ENCODE measurements at regions of chr14 and their contacts with region 1.

Region 1: DNA sequence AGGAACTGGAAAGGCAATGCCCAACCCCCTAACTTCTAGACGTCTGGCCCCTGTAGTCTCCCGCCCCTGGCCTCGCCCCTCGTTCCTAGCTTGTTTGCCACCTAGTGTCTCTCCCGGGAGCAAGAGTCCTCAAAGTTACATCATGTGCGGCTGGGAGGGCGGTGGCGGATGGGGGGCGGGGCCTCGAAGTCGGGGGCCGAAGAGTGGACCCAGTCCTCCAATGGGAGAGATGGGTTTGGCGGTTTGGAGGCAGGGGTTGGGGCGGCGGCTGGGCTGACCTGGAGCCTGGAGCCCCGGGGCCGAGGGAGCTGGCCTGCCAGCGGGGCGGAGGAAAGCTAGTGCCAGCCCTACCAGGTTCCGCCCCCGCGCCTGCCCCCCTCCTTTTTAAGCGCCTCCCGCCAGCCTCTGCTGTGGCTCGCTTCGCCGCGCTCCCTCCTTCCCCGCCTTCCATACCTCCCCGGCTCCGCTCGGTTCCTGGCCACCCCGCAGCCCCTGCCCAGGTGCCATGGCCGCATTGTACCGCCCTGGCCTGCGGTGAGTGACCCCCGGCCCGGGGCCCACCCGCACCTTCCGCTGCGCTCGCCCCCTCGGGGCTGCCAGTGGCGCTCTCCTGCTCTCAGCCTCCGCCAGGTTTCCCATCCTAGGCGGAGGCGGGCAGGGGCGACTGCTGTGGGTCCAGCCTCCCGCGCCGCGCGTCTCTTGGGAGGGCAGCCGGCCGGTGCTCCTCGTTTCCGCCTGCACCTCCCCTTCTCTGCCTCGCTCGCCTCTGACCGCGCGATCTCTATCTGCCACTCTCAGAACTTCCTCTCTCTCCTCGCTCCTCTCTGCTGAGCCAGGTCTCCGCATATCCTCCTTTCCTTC is at the start of gene PCK2:
- DNase-seq: peak; percentile 68
- H3K4me3 Mint-ChIP-seq: peak within 1 kb of the TSS; percentile 97
- H3K27ac Mint-ChIP-seq: peak within 1 kb of the TSS; percentile 98
- H3K4me1 Mint-ChIP-seq: peaks cover 31% of the 10 kb centered on the region
- H3K27me3 Mint-ChIP-seq: no peaks in the 10 kb centered on the region
- total RNA-seq, gene PCK2: 62.7 and 62.8 TPM in 2 replicates

Region 2: DNA sequence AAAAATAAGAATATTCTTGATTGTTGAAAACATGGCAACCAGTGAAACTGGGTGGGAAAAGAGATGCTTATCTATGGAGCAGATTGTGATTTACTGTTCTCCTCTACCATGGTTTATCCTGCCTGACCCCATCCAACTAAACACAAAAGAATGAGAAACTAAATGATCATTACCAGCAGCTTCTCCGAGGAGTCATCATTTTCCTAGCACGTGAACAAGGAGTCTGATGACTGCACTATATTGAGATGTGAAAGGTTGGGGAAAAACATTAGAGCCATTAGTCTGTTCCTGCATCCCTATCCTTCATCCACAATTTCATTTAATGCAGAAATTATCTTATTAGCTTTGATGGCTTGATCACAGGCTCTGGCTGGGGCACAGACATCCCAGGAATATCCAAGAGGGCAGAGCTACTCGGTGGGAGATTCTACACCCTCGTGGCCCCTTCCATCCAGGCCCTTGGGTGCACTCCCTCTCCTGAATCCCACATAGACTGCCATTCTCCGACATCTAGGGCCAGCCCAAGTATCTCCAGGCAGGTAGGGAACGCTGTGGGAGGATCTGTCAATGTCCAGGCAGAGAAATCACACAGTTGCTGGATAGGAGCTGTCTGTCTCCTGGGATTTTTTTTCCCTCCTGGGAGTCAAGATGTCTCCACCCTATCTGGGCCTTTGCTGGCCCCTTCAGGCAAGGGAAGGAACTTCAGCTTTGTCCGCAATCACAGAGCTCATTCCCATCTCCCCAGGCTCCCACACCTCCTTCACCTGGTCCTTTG is 183.8 kb before region 1 on chr14:
- intact Hi-C with region 1: no loop called
- DNase-seq: no peak
- H3K4me3 Mint-ChIP-seq: no peak overlapping the region
- H3K27ac Mint-ChIP-seq: no peak overlapping the region
- H3K4me1 Mint-ChIP-seq: peaks cover 7% of the 10 kb centered on the region
- H3K27me3 Mint-ChIP-seq: no peaks in the 10 kb centered on the region

Region 3: DNA sequence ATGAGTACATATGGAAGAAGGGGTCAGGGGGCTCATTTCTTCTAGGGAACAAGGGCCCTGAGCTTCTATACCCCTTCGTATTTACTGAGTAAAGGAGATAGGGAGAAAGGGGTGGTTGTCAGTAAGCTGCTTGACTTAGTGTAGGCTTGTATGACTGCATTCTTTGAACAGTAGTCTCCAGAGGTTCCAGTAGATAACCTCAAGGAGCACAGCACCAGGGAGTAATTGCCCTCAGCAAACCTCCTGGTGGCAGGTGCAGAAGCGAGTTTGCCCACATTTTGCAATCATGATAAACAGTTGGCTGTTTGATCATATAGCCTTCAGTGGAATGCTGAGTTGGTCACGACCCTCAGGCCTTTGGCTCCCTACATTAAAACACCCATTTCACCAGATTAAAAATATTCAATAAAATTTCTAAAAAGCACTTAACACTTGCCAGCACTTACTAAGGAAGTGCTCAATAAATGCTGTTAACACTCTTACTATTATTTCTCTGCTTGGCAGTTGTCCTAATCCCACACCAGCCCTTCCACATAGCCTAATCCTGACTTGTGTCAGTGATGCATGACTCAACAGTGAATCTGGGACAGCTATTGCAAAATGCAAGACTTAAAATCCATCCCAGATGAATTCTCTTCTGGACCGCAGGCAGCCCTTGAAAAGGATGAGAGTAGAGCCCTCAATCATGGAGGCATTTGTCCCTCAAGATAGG is 109.1 kb before region 1 on chr14:
- intact Hi-C with region 1: loop called (anchors 2 kb)
- DNase-seq: no peak
- H3K4me3 Mint-ChIP-seq: no peak overlapping the region
- H3K27ac Mint-ChIP-seq: no peak overlapping the region
- H3K4me1 Mint-ChIP-seq: peaks cover 14% of the 10 kb centered on the region
- H3K27me3 Mint-ChIP-seq: no peaks in the 10 kb centered on the region

Region 4: DNA sequence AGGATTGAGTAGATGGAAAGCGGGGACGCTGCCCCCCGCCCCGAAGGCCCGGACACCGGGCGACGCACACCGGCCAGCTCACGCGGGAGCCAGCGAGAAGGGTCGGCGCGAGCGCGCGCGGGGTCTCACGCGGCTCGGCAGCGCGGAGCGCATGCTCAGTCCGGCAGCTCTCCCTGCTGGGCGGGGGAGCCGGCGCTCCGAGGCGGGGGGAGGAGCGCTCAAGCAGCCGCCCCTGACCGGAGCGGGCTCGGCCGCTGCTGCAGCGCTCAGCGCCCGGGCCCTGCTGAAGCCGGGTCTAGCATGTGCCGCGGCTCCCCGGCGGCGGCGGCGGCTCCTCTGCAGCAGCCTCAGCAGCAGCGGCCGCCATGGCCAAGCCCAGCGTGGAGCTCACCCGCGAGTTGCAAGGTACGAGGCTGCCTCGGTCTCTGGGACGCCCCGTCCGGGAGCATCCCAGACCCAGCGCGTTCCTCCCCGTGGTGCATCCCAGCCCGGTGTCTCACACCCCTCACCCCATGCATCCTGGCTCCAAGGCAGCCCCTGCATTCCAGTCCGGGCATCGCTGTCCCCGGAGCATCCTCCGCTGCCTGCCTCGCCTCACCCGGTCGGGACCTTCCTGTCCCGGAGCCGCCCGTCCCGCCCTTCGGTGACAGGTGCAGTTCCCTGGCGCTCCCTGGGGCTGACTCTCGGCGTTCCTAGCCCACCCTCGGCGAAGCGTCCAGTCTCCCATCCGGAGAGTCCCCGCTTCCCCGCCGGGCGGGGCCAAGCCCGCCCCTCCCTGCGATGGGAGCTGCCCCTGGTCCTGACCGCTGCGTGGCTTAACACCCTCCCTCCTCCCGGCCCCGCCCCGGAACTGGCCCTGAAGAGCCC is 42.1 kb before region 1 on chr14 and contains the start of gene CARMIL3:
- intact Hi-C with region 1: loop called (anchors 1 kb)
- DNase-seq: peak; percentile 58
- H3K4me3 Mint-ChIP-seq: peak within 1 kb of the TSS; percentile 79
- H3K27ac Mint-ChIP-seq: peak within 1 kb of the TSS; percentile 61
- H3K4me1 Mint-ChIP-seq: peaks cover 17% of the 10 kb centered on the region
- H3K27me3 Mint-ChIP-seq: peaks cover 24% of the 10 kb centered on the region
- total RNA-seq, gene CARMIL3: 1.3 and 1.7 TPM in 2 replicates

Region 5: GRCh38 chr14:24058260-24058950 is 35.7 kb before region 1 on chr14:
- intact Hi-C with region 1: loop called (anchors 1 kb)
- DNase-seq: peak; percentile 38
- H3K4me3 Mint-ChIP-seq: no peak overlapping the region
- H3K27ac Mint-ChIP-seq: no peak overlapping the region
- H3K4me1 Mint-ChIP-seq: peaks cover 3% of the 10 kb centered on the region
- H3K27me3 Mint-ChIP-seq: peaks cover 3% of the 10 kb centered on the region

Region 6: DNA sequence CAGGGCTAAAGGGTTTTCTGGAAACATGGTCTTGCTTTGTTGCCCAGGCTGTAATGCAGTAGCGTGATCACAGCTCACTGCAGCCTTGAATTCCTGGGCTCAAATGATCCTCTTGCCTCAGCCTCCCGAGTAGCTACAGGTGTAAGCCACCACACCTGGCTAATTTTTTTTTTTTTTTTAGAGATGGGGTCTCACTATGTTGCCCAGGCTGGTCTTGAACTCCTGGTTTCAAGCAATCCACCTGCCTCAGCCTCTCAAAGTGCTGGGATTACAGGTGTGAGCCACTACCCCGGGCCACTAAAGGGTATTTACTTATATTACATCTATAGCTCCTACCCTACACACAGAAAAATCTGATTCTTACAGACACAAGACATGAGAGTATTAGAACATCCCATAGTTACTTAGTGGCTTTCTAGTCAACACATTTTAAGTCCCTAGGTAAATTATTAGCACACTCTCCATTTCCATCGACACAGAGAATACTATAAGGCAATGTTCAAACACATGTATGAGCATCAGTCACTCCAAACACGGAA is 14.3 kb after region 1 on chr14:
- intact Hi-C with region 1: loop called (anchors 1 kb)
- DNase-seq: no peak
- H3K4me3 Mint-ChIP-seq: no peak overlapping the region
- H3K27ac Mint-ChIP-seq: peak overlapping the region; percentile 93
- H3K4me1 Mint-ChIP-seq: peaks cover 18% of the 10 kb centered on the region
- H3K27me3 Mint-ChIP-seq: no peaks in the 10 kb centered on the region

Region 7: DNA sequence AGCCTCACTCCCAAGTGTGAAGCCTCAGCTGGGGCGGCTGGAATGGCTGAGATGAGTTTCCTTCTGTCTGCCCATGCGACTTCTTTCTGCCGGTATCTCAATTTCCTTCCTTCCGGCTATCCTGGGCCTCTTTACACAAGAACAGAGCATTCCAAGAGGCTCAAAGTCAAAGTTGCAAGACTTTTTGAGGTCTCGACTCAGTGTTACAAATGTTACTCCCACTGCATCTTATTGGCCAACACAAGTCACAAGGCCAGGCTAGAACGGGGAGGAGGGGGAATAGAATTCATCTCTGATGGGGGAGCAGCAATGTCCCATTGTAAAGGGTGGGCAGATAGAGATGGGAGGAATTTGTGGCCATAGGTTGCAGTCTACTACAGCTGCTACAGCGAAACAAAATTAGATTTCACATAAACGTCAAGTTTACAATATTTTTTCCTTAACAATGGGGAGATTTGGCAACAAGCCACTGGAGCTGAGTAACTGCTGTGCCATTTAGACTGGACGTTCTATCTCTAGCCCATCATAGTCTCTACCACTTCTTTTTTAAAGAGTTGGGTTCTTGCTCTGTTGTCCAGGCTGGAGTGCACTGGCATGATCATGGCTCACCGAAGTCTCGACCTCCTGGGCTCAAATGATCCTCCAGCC is 295.2 kb after region 1 on chr14:
- intact Hi-C with region 1: no loop called
- DNase-seq: no peak
- H3K4me3 Mint-ChIP-seq: no peak overlapping the region
- H3K27ac Mint-ChIP-seq: no peak overlapping the region
- H3K4me1 Mint-ChIP-seq: no peaks in the 10 kb centered on the region
- H3K27me3 Mint-ChIP-seq: peaks cover 32% of the 10 kb centered on the region

Region 8: DNA sequence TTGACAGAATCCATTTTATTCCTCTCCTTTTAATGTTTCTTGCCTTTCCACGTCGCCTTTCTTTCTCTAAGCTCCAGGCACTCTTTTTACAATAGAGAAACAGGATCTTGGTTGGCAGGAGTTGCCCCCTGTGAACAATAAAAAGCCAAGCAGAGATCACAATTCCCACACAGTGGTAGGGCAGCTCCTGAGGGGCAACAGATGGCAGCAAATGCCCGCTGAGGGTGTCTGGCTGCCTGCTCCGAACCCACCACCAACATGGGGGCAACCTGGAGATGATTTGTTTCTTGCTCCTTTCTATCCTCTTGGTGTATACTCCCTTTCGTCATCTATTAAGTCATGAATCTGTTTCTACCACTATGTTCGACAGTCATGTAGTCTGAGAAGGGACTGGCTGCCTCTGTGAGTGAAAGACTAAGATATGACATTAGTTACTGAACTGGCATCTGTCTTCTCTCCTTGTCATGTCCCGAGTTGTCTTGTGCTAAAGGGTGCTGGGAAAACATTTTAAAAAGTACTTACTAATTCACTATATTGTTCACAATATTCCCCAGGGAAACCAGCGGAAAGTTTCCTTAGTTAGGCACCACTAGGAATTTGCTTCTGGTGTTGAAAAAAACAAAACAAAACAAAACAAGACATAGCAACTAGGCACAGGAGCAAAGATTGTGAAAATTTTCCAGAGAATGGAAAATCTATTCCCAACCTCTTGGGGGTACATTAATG is 785.7 kb after region 1 on chr14:
- intact Hi-C with region 1: no loop called
- DNase-seq: no peak
- H3K4me3 Mint-ChIP-seq: no peak overlapping the region
- H3K27ac Mint-ChIP-seq: no peak overlapping the region
- H3K4me1 Mint-ChIP-seq: no peaks in the 10 kb centered on the region
- H3K27me3 Mint-ChIP-seq: peaks cover 3% of the 10 kb centered on the region

Measured in activated T-helper 2 cell treated with anti-CD3 and anti-CD28 coated beads, Interferon-gamma antibody, Interleukin-2, Interleukin-4, amounts not matched to agents 10 μg/mL and 5 μg/mL and 100 μg/mL, durations not matched to agents 14 hours and 24 hours and 36 hours (primary cell).